ENCODE measurements at regions of chr7 and their contacts with region 1.

Region 1: DNA sequence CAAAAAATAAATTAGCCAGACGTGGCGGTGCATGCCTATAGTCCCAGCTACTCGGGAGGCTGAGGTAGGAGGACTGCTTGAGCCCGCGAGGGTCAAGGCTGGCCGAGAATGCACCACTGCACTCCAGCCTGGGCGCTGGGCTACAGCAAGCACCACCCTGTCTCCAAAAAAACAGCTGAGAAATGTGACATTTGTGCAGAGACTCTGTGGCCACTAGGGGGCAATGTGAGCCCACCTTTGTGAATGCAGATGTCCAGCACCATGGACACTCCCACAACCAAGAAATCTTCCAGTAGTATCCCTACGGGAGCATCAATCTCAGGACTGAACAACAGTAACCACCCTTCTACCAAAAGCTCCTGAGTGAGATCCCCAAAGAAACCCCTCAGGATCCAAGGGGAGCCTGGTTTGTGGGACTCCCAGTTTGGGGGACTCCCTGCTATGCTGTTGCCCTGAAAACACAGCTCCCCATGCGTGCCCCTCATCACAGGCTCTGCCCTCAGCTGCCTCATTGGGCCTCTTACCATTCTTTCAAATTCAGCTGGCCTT is 6.2 kb upstream of the AHCYL2 start:
- DNase-seq: peak; percentile 73 to 81 (median 78)
- H3K4me3 ChIP-seq: no peak overlapping the region
- H3K4me3 Mint-ChIP-seq: peak overlapping the region in 1 of 2 donors; percentile 12
- H3K27ac ChIP-seq: no peak overlapping the region
- H3K27ac Mint-ChIP-seq: no peak overlapping the region
- H3K4me1 ChIP-seq: peaks cover 13 to 18% of the 10 kb centered on the region in 2 donors
- H3K4me1 Mint-ChIP-seq: peaks cover 21% of the 10 kb centered on the region
- H3K27me3 ChIP-seq: no peaks in the 10 kb centered on the region
- H3K27me3 Mint-ChIP-seq: peaks cover 0 to 9% (median 6%) of the 10 kb centered on the region in 3 donors
- CTCF ChIP-seq: peak; percentile 92

Region 2: DNA sequence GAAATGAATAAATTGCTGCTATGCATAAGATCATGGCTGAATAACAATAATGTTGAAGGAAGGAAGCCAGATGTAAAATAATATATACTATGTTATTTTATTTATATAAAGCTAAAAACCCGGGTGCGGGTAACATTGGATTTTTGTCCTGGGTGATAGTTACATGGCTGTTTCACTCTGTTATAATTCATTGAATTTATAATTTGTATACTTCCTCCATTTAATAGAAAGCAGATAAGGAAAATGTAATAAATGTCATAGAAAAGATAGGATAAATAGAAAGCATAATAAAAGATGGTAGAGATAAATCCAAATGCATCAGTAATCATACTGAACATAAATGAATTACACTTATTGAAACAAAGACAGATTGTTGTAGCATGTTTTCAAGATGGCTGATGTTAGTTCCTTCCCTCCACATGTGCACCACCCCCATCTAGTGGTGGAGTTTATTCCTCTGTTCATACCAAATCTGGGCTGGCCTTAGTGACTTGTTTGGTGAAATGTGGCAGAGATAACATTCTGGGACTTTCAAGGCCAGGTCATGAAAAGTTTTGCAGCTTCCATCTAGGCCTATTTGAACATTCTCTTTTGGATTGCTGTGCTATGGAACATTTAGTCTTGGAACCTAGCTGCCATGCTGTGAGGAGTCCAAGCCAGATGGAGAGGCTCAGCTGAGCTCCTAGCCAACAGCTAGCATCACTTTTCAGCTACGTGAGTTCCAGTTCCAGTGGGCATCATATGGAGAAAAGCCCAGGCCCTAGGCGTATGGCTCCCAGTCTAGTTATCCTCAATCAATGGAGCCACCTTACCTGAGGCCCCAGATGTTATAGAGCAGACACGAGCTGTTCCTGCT is 53.1 kb after region 1 on chr7:
- intact Hi-C with region 1: loop called (anchors 2 to 5 kb)
- DNase-seq: peak; percentile 62 to 72 (median 72)
- H3K4me3 ChIP-seq: peak overlapping the region; percentile 26 to 58 (median 38)
- H3K4me3 Mint-ChIP-seq: peak overlapping the region in 1 of 2 donors; percentile 83
- H3K27ac ChIP-seq: no peak overlapping the region
- H3K27ac Mint-ChIP-seq: peak overlapping the region in 3 of 7 donors; percentile 18 to 51 (median 43)
- H3K4me1 ChIP-seq: peaks cover 16 to 31% of the 10 kb centered on the region in 2 donors
- H3K4me1 Mint-ChIP-seq: peaks cover 20% of the 10 kb centered on the region
- H3K27me3 ChIP-seq: no peaks in the 10 kb centered on the region
- H3K27me3 Mint-ChIP-seq: no peaks in the 10 kb centered on the region
- CTCF ChIP-seq: peak; percentile 86

Region 3: GRCh38 chr7:129298268-129298893 is 79.8 kb after region 1 on chr7:
- intact Hi-C with region 1: loop called in 1 of 2 experiments (anchors 1 kb)
- DNase-seq: peak; percentile 4 to 16 (median 6)
- H3K4me3 ChIP-seq: no peak overlapping the region
- H3K4me3 Mint-ChIP-seq: no peak overlapping the region
- H3K27ac ChIP-seq: no peak overlapping the region
- H3K27ac Mint-ChIP-seq: no peak overlapping the region
- H3K4me1 ChIP-seq: no peaks in the 10 kb centered on the region
- H3K4me1 Mint-ChIP-seq: peaks cover 6% of the 10 kb centered on the region
- H3K27me3 ChIP-seq: no peaks in the 10 kb centered on the region
- H3K27me3 Mint-ChIP-seq: no peaks in the 10 kb centered on the region
- CTCF ChIP-seq: peak; percentile 72

Region 4: GRCh38 chr7:129468087-129468486 is 249.5 kb after region 1 on chr7:
- intact Hi-C with region 1: loop called (anchors 10 kb)
- DNase-seq: no peak
- H3K4me3 ChIP-seq: no peak overlapping the region
- H3K4me3 Mint-ChIP-seq: no peak overlapping the region
- H3K27ac ChIP-seq: no peak overlapping the region
- H3K27ac Mint-ChIP-seq: no peak overlapping the region
- H3K4me1 ChIP-seq: peaks cover 9 to 10% of the 10 kb centered on the region in 2 donors
- H3K4me1 Mint-ChIP-seq: peaks cover 2% of the 10 kb centered on the region
- H3K27me3 ChIP-seq: peaks cover 2 to 12% of the 10 kb centered on the region in 2 donors
- H3K27me3 Mint-ChIP-seq: peaks cover 12 to 14% (median 13%) of the 10 kb centered on the region in 3 donors
- CTCF ChIP-seq: no peak